Heart left ventricle (tissue), 16 donors: ENCODE measurements at regions of chr5 and their contacts with region 1.

Region 1: DNA sequence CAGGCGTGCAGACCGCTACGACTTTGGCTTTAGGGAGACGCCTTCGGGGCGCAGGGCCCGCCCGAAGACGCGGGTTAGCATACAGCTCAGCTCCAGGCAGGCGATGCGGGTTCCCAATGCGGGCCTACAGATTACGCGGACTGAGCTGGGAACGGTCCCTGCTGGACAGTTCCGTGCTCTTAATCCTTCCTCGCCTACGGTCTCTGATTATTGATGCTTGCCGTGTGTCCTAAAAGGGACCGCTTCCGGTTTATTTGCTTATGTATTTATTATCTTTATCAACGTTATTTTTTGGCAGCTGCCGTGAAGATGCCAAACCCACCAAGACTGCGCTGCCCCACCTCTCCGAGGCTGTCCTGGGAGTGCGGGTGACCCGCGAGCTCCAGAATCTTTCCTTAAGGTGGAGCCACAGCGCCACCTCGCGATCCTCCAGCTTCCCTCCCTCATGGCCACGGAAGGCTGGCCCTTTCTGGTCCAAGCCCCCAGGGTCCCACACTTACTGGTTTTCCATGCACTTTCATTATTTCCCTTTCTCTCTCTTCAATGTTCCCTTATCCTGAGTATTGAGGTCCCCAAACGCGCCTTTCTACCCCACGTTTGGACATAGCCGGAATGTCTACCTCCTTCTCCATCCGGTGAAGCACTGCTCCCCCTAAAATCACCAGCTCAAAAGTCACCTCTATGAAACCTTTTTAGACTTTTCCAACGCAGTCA is 7.0 kb upstream of the EBF1 start:
- DNase-seq: peak; percentile 73 to 85 (median 81)
- ATAC-seq: peak; percentile 79 to 92 (median 92)
- H3K4me3 ChIP-seq: peak overlapping the region; percentile 11 to 56 (median 44)
- H3K27ac ChIP-seq: peak overlapping the region in 3 of 12 donors; percentile 8 to 51 (median 36)
- H3K4me1 ChIP-seq: peaks cover 0 to 42% (median 13%) of the 10 kb centered on the region in 12 donors
- H3K27me3 ChIP-seq: peaks cover 0 to 65% (median 19%) of the 10 kb centered on the region in 9 donors
- CTCF ChIP-seq: peak; percentile 83 to 98 (median 95)
- POLR2A ChIP-seq: no peak

Region 2: GRCh38 chr5:158013939-158014338 is 1092.8 kb before region 1 on chr5:
- intact Hi-C with region 1: loop called in 2 of 10 experiments (anchors 10 kb)
- DNase-seq: peak in 3 of 5 donors; percentile 20 to 30 (median 28)
- ATAC-seq: peak; percentile 50 to 58 (median 51)
- H3K4me3 ChIP-seq: no peak overlapping the region
- H3K27ac ChIP-seq: no peak overlapping the region
- H3K4me1 ChIP-seq: peaks cover 0 to 5% (median 0%) of the 10 kb centered on the region in 12 donors
- H3K27me3 ChIP-seq: peaks cover 0 to 2% (median 0%) of the 10 kb centered on the region in 9 donors
- CTCF ChIP-seq: peak in 11 of 12 donors; percentile 16 to 57 (median 38)
- POLR2A ChIP-seq: no peak

Region 3: GRCh38 chr5:158414780-158415179 is 691.9 kb before region 1 on chr5:
- intact Hi-C with region 1: loop called in 1 of 10 experiments (anchors 10 kb)
- DNase-seq: peak in 1 of 5 donors; percentile 26
- ATAC-seq: peak; percentile 65 to 95 (median 86)
- H3K4me3 ChIP-seq: no peak overlapping the region
- H3K27ac ChIP-seq: peak overlapping the region in 10 of 12 donors; percentile 17 to 71 (median 62)
- H3K4me1 ChIP-seq: peaks cover 0 to 25% (median 2%) of the 10 kb centered on the region in 12 donors
- H3K27me3 ChIP-seq: no peaks in the 10 kb centered on the region
- CTCF ChIP-seq: no peak
- POLR2A ChIP-seq: no peak

Region 4: GRCh38 chr5:158538506-158539074 is 568.1 kb before region 1 on chr5:
- intact Hi-C with region 1: loop called in 1 of 10 experiments (anchors 10 kb)
- DNase-seq: peak in 2 of 5 donors; percentile 34 to 37
- ATAC-seq: peak; percentile 17 to 74 (median 61)
- H3K4me3 ChIP-seq: no peak overlapping the region
- H3K27ac ChIP-seq: peak overlapping the region in 5 of 12 donors; percentile 3 to 43 (median 22)
- H3K4me1 ChIP-seq: peaks cover 0 to 10% (median 3%) of the 10 kb centered on the region in 12 donors
- H3K27me3 ChIP-seq: no peaks in the 10 kb centered on the region
- CTCF ChIP-seq: no peak
- POLR2A ChIP-seq: no peak